PC-9 (cell line): ENCODE measurements at regions of chr3 and their contacts with region 1.

Region 1: DNA sequence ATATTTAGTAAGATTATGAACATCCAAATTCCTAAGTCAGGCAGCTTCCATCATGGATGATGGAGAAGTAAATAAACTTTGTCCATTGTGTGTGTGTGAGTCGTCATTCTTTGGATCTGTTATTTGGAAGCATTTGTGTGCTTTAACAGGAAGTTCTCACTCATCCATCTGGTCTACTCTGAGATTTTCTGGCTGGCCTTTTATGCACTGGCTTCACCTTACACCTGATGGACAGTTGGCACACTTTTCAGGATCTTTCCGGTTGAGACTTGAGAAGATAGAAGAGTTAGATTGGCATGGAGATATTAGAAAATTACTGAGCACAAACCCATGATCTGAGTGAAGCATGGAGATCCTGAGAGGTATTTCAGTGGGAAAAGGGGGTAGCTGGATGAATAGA is 12.6 kb downstream of the SYNPR start:
- DNase-seq: no peak
- H3K4me3 ChIP-seq: no peak overlapping the region
- H3K27ac ChIP-seq: no peak overlapping the region
- H3K4me1 ChIP-seq: no peaks in the 10 kb centered on the region
- H3K27me3 ChIP-seq: no peaks in the 10 kb centered on the region
- CTCF ChIP-seq: no peak

Region 2: DNA sequence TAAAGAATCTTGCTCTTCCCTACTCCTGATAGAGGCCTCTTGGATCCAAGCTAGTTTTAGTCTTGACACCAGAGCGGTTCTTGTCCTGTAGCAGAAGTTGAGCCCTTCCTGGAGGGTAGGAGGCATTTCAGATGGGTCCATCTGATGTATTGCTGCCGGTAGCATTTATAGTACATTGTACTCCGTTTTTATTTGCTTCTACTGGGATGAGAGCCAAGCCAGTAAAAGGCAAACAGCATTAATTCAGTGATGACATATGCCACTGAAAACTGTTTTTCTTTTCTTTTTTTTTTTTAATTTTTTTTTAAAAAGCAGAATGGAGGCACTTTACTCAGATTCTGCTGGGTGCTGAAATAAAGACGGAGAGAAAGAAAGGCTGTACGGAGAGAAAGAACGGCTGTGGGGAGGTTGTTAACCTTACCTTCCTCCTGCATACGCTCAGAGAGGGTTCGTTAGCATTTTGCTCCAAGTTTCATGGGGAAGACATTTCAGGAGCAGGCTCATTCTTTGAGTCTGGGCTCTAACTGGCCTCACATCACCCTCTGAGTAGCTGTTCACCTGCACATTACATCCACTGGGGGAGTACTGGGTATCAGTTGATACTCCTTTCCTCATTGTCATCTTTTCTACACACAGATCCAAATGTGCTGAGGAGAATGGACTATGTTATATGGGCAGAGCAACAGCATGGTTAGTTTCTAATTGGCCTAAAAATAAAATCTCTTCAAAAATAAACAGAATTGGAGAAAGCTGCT is 1078.8 kb before region 1 on chr3:
- CTCF ChIA-PET with region 1: interaction called, 14 read pairs
- POLR2A ChIA-PET with region 1: no interaction called
- intact Hi-C with region 1: no loop called
- DNase-seq: no peak
- H3K4me3 ChIP-seq: no peak overlapping the region
- H3K27ac ChIP-seq: no peak overlapping the region
- H3K4me1 ChIP-seq: no peaks in the 10 kb centered on the region
- H3K27me3 ChIP-seq: no peaks in the 10 kb centered on the region
- CTCF ChIP-seq: no peak

Region 3: DNA sequence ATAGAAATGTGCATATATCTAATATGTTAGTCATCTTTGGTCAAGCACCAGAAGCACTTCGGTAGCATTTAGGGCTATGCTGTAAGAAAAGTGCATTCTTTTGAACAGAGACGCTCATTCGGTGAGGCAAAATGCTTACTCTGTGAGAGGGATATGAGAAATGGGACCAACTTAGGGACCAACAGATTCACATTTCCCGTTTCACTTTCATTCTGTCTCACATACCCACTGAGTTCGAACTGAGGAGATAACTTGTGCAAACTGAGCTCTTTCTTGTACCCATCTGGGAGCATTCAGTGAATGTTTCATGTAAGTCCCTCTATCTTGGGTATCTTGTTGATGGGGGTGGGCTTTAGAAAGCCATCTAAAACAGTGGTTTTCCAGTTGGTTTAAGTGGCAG is 1052.7 kb before region 1 on chr3:
- CTCF ChIA-PET with region 1: no interaction called
- POLR2A ChIA-PET with region 1: no interaction called
- intact Hi-C with region 1: no loop called
- DNase-seq: no peak
- H3K4me3 ChIP-seq: no peak overlapping the region
- H3K27ac ChIP-seq: no peak overlapping the region
- H3K4me1 ChIP-seq: no peaks in the 10 kb centered on the region
- H3K27me3 ChIP-seq: no peaks in the 10 kb centered on the region
- CTCF ChIP-seq: no peak